Activated T-helper 1 cell treated with anti-CD3 and anti-CD28 coated beads, Interleukin-12 subunit alpha, Interleukin-12 subunit beta, Interleukin-2, Interleukin-4 antibody, amounts not matched to agents 30 ng/mL and 10 ng/mL and 1 ng/mL, durations not matched to agents 14 hours and 24 hours and 36 hours (primary cell): ENCODE measurements at regions of chr19 and their contacts with region 1.

Region 1: DNA sequence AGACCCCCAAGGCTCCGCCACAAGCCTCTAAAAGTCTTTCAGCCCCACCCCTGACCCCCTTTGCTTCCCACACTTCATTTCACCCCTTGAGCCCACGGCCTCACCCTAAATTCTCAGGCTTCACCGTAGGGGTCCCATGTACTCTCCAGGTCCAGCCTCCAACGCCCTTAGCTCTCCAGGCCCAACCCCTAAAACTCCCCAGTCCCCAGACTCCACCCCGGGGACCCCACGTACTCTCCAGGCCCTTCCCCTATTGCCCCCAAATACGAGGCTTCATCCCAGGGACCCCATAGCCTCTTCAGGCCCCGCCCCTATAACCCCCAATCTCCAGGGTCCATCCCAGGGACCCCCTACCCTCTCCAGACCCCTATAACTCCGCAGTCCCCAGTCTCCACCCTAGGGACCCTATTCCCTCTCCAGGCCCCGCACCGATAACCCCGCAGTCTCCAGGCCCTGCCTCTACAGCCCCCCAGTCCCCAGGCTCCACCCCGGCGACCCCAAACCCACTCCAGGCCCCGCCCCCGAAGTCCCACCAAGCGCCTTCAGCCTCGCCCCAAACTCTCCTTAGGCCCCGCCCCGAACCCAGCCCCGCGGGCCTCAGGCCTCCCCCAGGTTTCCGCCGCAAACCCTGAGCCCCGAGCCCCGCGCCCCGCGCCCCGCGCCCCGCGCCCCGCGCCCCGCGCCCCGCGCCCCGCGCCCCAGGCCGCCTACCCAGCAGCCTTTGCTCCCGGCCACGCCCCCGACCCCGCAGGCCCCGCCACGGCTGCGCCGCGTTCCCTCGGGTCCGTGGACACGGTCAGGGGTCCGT is 540 bp downstream of the MED16 start:
- DNase-seq: no peak
- H3K4me3 Mint-ChIP-seq: peak overlapping the region; percentile 94
- H3K27ac Mint-ChIP-seq: peak overlapping the region; percentile 82
- H3K4me1 Mint-ChIP-seq: peaks cover 8% of the 10 kb centered on the region
- H3K27me3 Mint-ChIP-seq: no peaks in the 10 kb centered on the region

Region 2: GRCh38 chr19:778910-779653 is 113.4 kb before region 1 on chr19:
- intact Hi-C with region 1: no loop called
- DNase-seq: no peak
- H3K4me3 Mint-ChIP-seq: no peak overlapping the region
- H3K27ac Mint-ChIP-seq: no peak overlapping the region
- H3K4me1 Mint-ChIP-seq: no peaks in the 10 kb centered on the region
- H3K27me3 Mint-ChIP-seq: peaks cover 3% of the 10 kb centered on the region

Region 3: DNA sequence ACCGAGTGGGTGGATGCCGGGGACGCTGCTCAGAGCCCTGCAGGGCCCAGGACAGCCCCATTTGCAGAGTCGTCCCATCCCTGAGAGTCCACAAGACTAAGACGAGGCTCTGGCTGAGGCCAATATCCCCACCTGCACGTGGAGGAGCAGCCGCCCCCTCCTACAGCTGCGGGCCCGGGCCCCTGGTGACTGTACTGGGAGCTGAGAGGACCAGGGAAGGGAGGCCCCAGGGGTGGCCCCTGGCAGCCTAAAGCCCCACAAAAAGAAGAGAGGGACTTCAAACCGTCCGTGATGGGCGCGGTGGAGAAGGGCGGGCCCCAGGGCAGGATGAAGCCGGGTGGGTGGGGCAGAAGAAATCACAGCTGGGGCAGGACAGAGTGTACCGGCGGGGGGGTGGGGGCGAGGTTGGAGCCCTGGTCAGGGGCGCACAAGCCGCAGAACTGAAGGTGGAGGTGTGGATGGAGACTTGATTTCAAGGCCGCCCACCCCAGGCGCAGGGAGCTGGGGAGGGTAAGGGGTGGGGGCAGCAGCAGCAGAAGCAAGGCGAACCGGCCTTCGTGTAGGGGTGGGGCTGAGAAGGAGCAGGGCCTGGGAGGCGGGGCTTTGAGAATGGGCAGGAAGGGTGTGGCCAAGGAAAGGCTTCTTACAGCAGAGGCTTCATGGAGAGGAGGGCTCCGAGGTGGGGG is 20.0 kb before region 1 on chr19:
- intact Hi-C with region 1: loop called (anchors 1 kb)
- DNase-seq: peak; percentile 84
- H3K4me3 Mint-ChIP-seq: peak overlapping the region; percentile 69
- H3K27ac Mint-ChIP-seq: peak overlapping the region; percentile 68
- H3K4me1 Mint-ChIP-seq: no peaks in the 10 kb centered on the region
- H3K27me3 Mint-ChIP-seq: no peaks in the 10 kb centered on the region

Region 4: GRCh38 chr19:913080-913748 is 20.8 kb after region 1 on chr19 and contains the start of gene R3HDM4:
- intact Hi-C with region 1: loop called (anchors 1 kb)
- DNase-seq: peak; percentile 81
- H3K4me3 Mint-ChIP-seq: peak within 1 kb of the TSS; percentile 85
- H3K27ac Mint-ChIP-seq: peak within 1 kb of the TSS; percentile 89
- H3K4me1 Mint-ChIP-seq: peaks cover 19% of the 10 kb centered on the region
- H3K27me3 Mint-ChIP-seq: peaks cover 2% of the 10 kb centered on the region
- total RNA-seq, gene R3HDM4: 94.3 and 96.4 TPM in 2 replicates

Region 5: GRCh38 chr19:958967-959820 is 66.7 kb after region 1 on chr19:
- intact Hi-C with region 1: no loop called
- DNase-seq: no peak
- H3K4me3 Mint-ChIP-seq: no peak overlapping the region
- H3K27ac Mint-ChIP-seq: peak overlapping the region; percentile 68
- H3K4me1 Mint-ChIP-seq: peaks cover 4% of the 10 kb centered on the region
- H3K27me3 Mint-ChIP-seq: no peaks in the 10 kb centered on the region